Naive thymus-derived CD4-positive, alpha-beta T cell (primary cell): ENCODE measurements at regions of chr7 and their contacts with region 1.

Region 1: DNA sequence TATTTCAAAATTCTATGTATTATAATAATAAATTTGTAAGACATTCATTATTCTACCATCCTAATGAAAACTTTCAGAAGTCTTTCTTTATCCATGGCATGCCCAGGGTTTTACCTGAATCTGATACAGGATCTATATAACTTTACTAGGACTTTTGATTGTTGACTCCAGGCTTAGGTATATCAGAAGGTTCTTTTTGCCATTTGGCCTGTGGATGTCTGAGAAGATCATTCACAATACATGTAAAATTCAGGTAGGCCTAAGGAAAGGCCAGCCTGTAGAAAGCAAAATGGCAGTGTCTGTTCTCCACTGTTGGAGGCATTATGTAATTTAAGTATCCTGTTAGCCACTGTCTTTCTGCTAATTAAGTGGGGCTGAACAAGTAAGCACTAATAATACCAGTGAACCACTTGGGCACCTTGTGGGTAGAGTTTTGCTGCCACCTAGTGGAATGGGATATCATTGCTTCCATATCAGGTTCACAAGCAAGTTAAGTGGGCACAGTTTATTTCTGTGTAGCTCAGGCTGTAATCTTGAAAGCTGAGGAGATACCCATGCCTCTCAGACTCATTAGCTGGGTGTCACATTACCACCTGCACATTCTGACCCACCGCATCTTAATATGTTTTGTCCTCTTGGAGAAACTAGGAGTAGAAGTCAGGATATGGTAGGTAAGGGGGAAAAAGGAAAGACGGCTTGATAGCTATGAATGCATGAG is 105.5 kb downstream of the SEPTIN7 start:
- DNase-seq: peak; percentile 21 to 79 (median 70)
- ATAC-seq: peak; percentile 97
- H3K4me3 ChIP-seq: no peak overlapping the region
- H3K4me3 Mint-ChIP-seq: no peak overlapping the region
- H3K27ac ChIP-seq: no peak overlapping the region
- H3K27ac Mint-ChIP-seq: peak overlapping the region in 6 of 9 donors; percentile 37 to 88 (median 66)
- H3K4me1 ChIP-seq: no peaks in the 10 kb centered on the region
- H3K4me1 Mint-ChIP-seq: peaks cover 0 to 10% (median 0%) of the 10 kb centered on the region in 7 donors
- H3K27me3 ChIP-seq: no peaks in the 10 kb centered on the region
- H3K27me3 Mint-ChIP-seq: no peaks in the 10 kb centered on the region

Region 2: DNA sequence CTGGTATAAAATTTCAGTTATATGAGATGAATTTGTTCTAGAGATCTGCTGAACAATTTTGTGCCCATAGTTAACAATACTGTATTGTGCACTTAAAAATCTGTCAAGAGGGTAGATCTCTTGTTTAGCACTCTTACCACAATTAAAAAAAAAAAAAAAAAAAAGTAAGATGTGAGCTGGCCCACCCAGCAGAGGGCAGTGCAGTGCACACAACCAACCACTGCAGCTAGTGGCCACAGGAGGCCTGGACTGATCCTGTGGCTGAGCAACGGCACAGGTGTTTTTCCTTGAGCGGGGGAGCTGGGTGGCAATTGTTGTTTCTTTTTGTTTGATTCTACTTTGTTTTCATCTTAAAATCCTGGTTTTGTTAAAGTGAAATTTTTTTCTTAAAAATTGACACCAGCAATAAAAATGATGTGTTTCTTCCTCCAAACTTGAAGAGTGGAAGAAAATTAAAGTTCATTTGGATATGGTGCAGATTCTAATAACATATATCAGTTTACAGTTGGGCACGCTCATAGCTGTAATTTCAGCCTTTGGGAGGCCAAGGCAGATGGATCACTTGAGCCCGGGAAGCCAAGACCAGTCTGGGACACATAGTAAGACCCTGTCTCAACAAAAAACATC is 481.4 kb before region 1 on chr7:
- CTCF ChIA-PET with region 1: no interaction called
- POLR2A ChIA-PET with region 1: no interaction called
- intact Hi-C with region 1: loop called in 1 of 2 experiments (anchors 1 kb)
- DNase-seq: peak in 8 of 9 donors; percentile 17 to 51 (median 42)
- ATAC-seq: peak; percentile 85
- H3K4me3 ChIP-seq: no peak overlapping the region
- H3K4me3 Mint-ChIP-seq: no peak overlapping the region
- H3K27ac ChIP-seq: no peak overlapping the region
- H3K27ac Mint-ChIP-seq: no peak overlapping the region
- H3K4me1 ChIP-seq: no peaks in the 10 kb centered on the region
- H3K4me1 Mint-ChIP-seq: peaks cover 0 to 7% (median 0%) of the 10 kb centered on the region in 7 donors
- H3K27me3 ChIP-seq: no peaks in the 10 kb centered on the region
- H3K27me3 Mint-ChIP-seq: peaks cover 0 to 35% (median 23%) of the 10 kb centered on the region in 5 donors

Region 3: GRCh38 chr7:35537067-35538023 is 369.0 kb before region 1 on chr7:
- CTCF ChIA-PET with region 1: interaction called, 4 read pairs
- POLR2A ChIA-PET with region 1: no interaction called
- intact Hi-C with region 1: loop called (anchors 1 to 5 kb)
- DNase-seq: peak; percentile 51 to 82 (median 75)
- ATAC-seq: peak; percentile 98
- H3K4me3 ChIP-seq: peak overlapping the region; percentile 46
- H3K4me3 Mint-ChIP-seq: peak overlapping the region; percentile 66 to 87 (median 80)
- H3K27ac ChIP-seq: no peak overlapping the region
- H3K27ac Mint-ChIP-seq: no peak overlapping the region
- H3K4me1 ChIP-seq: no peaks in the 10 kb centered on the region
- H3K4me1 Mint-ChIP-seq: peaks cover 0 to 4% (median 0%) of the 10 kb centered on the region in 7 donors
- H3K27me3 ChIP-seq: no peaks in the 10 kb centered on the region
- H3K27me3 Mint-ChIP-seq: peaks cover 0 to 24% (median 15%) of the 10 kb centered on the region in 5 donors

Region 4: DNA sequence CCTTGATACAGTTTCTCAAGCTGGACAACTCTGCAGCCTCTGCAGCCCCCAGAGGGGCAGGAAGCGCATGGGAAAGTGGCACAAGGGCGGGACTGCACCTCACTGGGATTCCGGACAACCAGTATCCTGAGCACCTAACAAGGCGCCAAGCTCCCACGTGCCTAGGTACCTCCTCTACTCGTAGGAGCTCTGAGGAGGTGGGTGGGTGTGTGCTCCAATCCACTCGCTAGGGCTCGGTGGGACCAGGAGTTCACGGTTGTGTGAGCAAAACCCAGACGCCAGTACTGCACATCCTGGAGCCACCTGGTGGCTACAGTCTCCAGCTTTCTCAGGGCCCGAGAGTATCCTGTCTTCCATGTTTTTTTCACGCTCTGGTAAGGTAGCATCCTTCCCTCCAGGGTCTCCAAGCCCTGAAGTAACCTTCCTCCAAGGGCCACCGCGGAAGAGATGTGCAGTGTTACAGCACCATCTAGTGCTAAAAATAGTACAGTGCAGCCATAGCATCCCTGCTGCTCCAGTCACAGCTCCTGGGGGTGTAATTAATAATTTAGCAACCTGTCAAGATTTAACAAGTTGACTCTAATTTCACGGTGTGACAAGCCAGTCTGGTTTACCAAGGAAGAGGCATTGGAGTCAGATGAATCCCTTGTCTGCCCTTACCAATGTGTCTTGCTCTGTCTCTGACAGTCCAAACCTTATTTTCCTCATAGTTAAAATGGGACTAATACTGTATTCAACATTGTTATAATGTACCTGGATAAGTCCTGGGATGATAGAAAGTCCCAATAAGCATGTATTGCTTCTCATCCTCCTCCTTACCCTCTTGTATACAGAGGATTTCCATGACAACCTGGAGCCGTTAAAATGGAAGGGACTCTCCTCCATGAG is 281.8 kb before region 1 on chr7:
- CTCF ChIA-PET with region 1: interaction called, 7 read pairs
- POLR2A ChIA-PET with region 1: interaction called, 4 read pairs
- intact Hi-C with region 1: loop called (anchors 2 kb)
- DNase-seq: peak; percentile 6 to 47 (median 33)
- ATAC-seq: peak; percentile 88
- H3K4me3 ChIP-seq: no peak overlapping the region
- H3K4me3 Mint-ChIP-seq: peak overlapping the region in 5 of 10 donors; percentile 7 to 35 (median 17)
- H3K27ac ChIP-seq: no peak overlapping the region
- H3K27ac Mint-ChIP-seq: peak overlapping the region in 1 of 9 donors; percentile 26
- H3K4me1 ChIP-seq: peaks cover 0 to 4% of the 10 kb centered on the region in 2 donors
- H3K4me1 Mint-ChIP-seq: peaks cover 2 to 8% (median 5%) of the 10 kb centered on the region in 7 donors
- H3K27me3 ChIP-seq: no peaks in the 10 kb centered on the region
- H3K27me3 Mint-ChIP-seq: no peaks in the 10 kb centered on the region

Region 5: DNA sequence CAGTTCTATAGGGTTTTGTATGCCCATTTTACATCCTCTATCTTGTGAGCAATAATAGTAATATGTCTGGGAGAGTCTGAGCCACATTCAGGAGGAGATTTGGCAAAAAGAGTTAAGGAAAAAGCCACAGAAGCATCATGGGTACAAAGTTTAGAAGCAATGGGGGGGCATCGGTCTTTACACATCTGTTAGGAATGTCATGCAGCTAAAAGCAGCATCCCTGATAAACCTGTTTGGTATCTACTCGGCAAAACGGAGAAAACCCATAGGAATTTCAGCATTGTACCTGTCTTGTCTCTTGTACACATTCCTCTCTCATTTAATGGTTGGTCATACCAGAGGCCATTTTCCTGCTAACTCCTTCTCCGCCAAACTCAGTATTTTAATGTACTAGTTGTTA is 198.9 kb before region 1 on chr7:
- CTCF ChIA-PET with region 1: interaction called, 19 read pairs
- POLR2A ChIA-PET with region 1: interaction called, 4 read pairs
- intact Hi-C with region 1: loop called (anchors 1 kb)
- DNase-seq: no peak
- ATAC-seq: no peak
- H3K4me3 ChIP-seq: no peak overlapping the region
- H3K4me3 Mint-ChIP-seq: no peak overlapping the region
- H3K27ac ChIP-seq: no peak overlapping the region
- H3K27ac Mint-ChIP-seq: peak overlapping the region in 1 of 9 donors; percentile 15
- H3K4me1 ChIP-seq: peaks cover 8% of the 10 kb centered on the region in 2 donors
- H3K4me1 Mint-ChIP-seq: peaks cover 5 to 30% (median 21%) of the 10 kb centered on the region in 7 donors
- H3K27me3 ChIP-seq: no peaks in the 10 kb centered on the region
- H3K27me3 Mint-ChIP-seq: peaks cover 0 to 21% (median 0%) of the 10 kb centered on the region in 5 donors

Region 6: GRCh38 chr7:35714862-35715261 is 191.5 kb before region 1 on chr7:
- CTCF ChIA-PET with region 1: interaction called, 19 read pairs
- POLR2A ChIA-PET with region 1: interaction called, 3 read pairs
- intact Hi-C with region 1: no loop called
- DNase-seq: no peak
- ATAC-seq: peak; percentile 22
- H3K4me3 ChIP-seq: no peak overlapping the region
- H3K4me3 Mint-ChIP-seq: no peak overlapping the region
- H3K27ac ChIP-seq: no peak overlapping the region
- H3K27ac Mint-ChIP-seq: peak overlapping the region in 2 of 9 donors; percentile 5 to 34
- H3K4me1 ChIP-seq: peaks cover 4% of the 10 kb centered on the region in 2 donors
- H3K4me1 Mint-ChIP-seq: peaks cover 5 to 17% (median 8%) of the 10 kb centered on the region in 7 donors
- H3K27me3 ChIP-seq: no peaks in the 10 kb centered on the region
- H3K27me3 Mint-ChIP-seq: peaks cover 0 to 28% (median 0%) of the 10 kb centered on the region in 5 donors

Region 7: GRCh38 chr7:35758421-35758820 is 147.9 kb before region 1 on chr7:
- CTCF ChIA-PET with region 1: no interaction called
- POLR2A ChIA-PET with region 1: no interaction called
- intact Hi-C with region 1: loop called in 1 of 2 experiments (anchors 1 kb)
- DNase-seq: peak in 2 of 9 donors; percentile 2 to 6
- ATAC-seq: no peak
- H3K4me3 ChIP-seq: no peak overlapping the region
- H3K4me3 Mint-ChIP-seq: no peak overlapping the region
- H3K27ac ChIP-seq: no peak overlapping the region
- H3K27ac Mint-ChIP-seq: no peak overlapping the region
- H3K4me1 ChIP-seq: no peaks in the 10 kb centered on the region
- H3K4me1 Mint-ChIP-seq: peaks cover 0 to 10% (median 5%) of the 10 kb centered on the region in 7 donors
- H3K27me3 ChIP-seq: no peaks in the 10 kb centered on the region
- H3K27me3 Mint-ChIP-seq: peaks cover 0 to 16% (median 0%) of the 10 kb centered on the region in 5 donors